HepG2 (cell line): ENCODE measurements at regions of chr5 and their contacts with region 1.

Region 1: GRCh38 chr5:157743163-157744050 is at the start of gene LSM11:
- DNase-seq: peak; percentile 67
- ATAC-seq: peak; percentile 95
- H3K4me3 ChIP-seq: peak within 1 kb of the TSS; percentile 74 to 88 (median 84)
- H3K27ac ChIP-seq: peak within 1 kb of the TSS; percentile 46
- H3K4me1 ChIP-seq: peaks cover 20% of the 10 kb centered on the region
- H3K27me3 ChIP-seq: no peaks in the 10 kb centered on the region; a peak in 1 of 5 replicates
- CTCF ChIP-seq: peak; percentile 98
- EP300 ChIP-seq: 0 out of 4 replicates have a peak, but pooled peaks of 1 of the 2 experiments have one; percentile 33
- POLR2A ChIP-seq: peak; percentile 31 to 39; a peak in 3 of 4 replicates
- RAD21 ChIP-seq: peak; percentile 98
- total RNA-seq, gene LSM11: 7.2 and 9.9 TPM in 2 replicates

Region 2: GRCh38 chr5:156934450-156935211 is 808.8 kb before region 1 on chr5:
- CTCF ChIA-PET with region 1: no interaction called
- POLR2A ChIA-PET with region 1: no interaction called
- in situ Hi-C with region 1: no loop called
- intact Hi-C with region 1: no loop called
- DNase-seq: peak; percentile 9
- ATAC-seq: 0 out of 3 replicates have a peak, but pooled peaks have one; percentile 30
- H3K4me3 ChIP-seq: no peak overlapping the region
- H3K27ac ChIP-seq: no peak overlapping the region
- H3K4me1 ChIP-seq: peaks cover 12% of the 10 kb centered on the region; the same call in 1 of the 2 replicates
- H3K27me3 ChIP-seq: no peaks in the 10 kb centered on the region; a peak in 1 of 5 replicates
- CTCF ChIP-seq: peak; percentile 52
- EP300 ChIP-seq: no peak
- POLR2A ChIP-seq: no peak
- RAD21 ChIP-seq: no peak

Region 3: GRCh38 chr5:157328277-157328912 is 415.0 kb before region 1 on chr5:
- CTCF ChIA-PET with region 1: interaction called, 11 read pairs
- POLR2A ChIA-PET with region 1: no interaction called
- in situ Hi-C with region 1: loop called (anchors 25 kb)
- intact Hi-C with region 1: loop called (anchors 1 kb)
- DNase-seq: peak; percentile 73
- ATAC-seq: peak; percentile 98
- H3K4me3 ChIP-seq: no peak overlapping the region; a peak in 1 of 6 replicates
- H3K27ac ChIP-seq: no peak overlapping the region
- H3K4me1 ChIP-seq: peaks cover 36% of the 10 kb centered on the region
- H3K27me3 ChIP-seq: no peaks in the 10 kb centered on the region
- CTCF ChIP-seq: peak; percentile 92
- EP300 ChIP-seq: no peak
- POLR2A ChIP-seq: no peak
- RAD21 ChIP-seq: peak; percentile 63

Region 4: GRCh38 chr5:157431544-157432200 is 311.7 kb before region 1 on chr5:
- CTCF ChIA-PET with region 1: interaction called, 12 read pairs
- POLR2A ChIA-PET with region 1: no interaction called
- in situ Hi-C with region 1: no loop called
- intact Hi-C with region 1: no loop called
- DNase-seq: peak; percentile 34
- ATAC-seq: peak; percentile 72
- H3K4me3 ChIP-seq: no peak overlapping the region
- H3K27ac ChIP-seq: no peak overlapping the region
- H3K4me1 ChIP-seq: no peaks in the 10 kb centered on the region
- H3K27me3 ChIP-seq: no peaks in the 10 kb centered on the region
- CTCF ChIP-seq: peak; percentile 66
- EP300 ChIP-seq: no peak
- POLR2A ChIP-seq: no peak
- RAD21 ChIP-seq: no peak

Region 5: DNA sequence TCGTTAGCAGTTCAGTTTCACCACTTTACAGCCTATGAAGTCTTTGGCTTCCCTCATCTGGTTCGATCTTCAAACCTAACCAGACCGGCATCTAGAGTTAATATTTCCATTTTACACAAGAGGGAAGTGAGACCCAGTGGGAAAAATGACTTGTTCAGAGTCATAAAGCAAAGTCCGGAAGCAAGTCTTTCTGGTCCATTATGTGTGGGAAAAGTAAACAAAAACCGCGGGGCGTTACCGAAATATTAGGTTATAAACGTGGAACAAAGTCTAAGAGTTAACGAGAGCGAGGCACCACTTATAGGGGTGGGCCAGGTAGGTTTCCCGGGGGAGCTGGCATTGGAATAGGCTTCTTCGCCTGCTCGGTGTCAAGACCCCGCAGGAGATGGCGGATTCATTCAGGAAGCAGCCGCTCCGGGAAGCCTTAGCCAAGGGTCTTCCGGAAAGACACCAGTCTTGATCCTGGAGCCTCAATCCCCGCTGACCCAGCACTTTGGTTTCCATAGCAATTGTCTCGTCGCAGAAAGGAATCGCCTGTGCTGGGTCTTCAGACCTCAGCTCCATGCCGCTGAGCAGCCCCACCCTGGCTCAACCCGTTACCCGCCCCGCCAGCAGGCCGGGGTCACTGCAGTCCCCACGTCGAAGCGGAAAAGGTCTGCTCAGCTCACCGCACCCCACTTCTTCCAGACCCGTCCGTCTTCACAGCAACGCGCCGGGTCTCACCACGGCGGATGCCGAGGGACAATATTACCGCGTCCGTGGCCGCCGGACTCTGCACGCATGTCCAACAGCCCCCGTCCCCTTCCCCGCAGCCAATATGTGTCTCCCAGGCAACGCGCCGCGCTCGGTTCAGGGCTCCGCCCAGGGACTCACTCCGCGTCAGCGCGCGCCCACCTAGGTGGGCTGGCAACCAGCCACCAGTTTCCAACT is 72.5 kb before region 1 on chr5 and contains the start of gene C5orf52:
- CTCF ChIA-PET with region 1: interaction called, 54 read pairs
- POLR2A ChIA-PET with region 1: no interaction called
- in situ Hi-C with region 1: loop called (anchors 5 kb)
- intact Hi-C with region 1: loop called (anchors 1 kb)
- DNase-seq: peak; percentile 47
- ATAC-seq: no peak
- H3K4me3 ChIP-seq: no peak within 1 kb of the TSS; a peak in 1 of 6 replicates
- H3K27ac ChIP-seq: no peak within 1 kb of the TSS
- H3K4me1 ChIP-seq: peaks cover 15% of the 10 kb centered on the region; the same call in 1 of the 2 replicates
- H3K27me3 ChIP-seq: no peaks in the 10 kb centered on the region
- CTCF ChIP-seq: no peak
- EP300 ChIP-seq: no peak
- POLR2A ChIP-seq: no peak
- RAD21 ChIP-seq: no peak
- total RNA-seq, gene C5orf52: not detected in 2 replicates

Region 6: GRCh38 chr5:157731272-157732129 is 11.9 kb before region 1 on chr5 and contains the start of gene THG1L:
- CTCF ChIA-PET with region 1: interaction called, 3 read pairs
- POLR2A ChIA-PET with region 1: interaction called, 13 read pairs
- in situ Hi-C with region 1: no loop called
- intact Hi-C with region 1: loop called (anchors 1 kb)
- DNase-seq: peak; percentile 95
- ATAC-seq: peak; percentile 100
- H3K4me3 ChIP-seq: peak within 1 kb of the TSS; percentile 64 to 83 (median 67)
- H3K27ac ChIP-seq: peak within 1 kb of the TSS; percentile 87
- H3K4me1 ChIP-seq: peaks cover 7% of the 10 kb centered on the region; the same call in 1 of the 2 replicates
- H3K27me3 ChIP-seq: no peaks in the 10 kb centered on the region; a peak in 1 of 5 replicates
- CTCF ChIP-seq: no peak
- EP300 ChIP-seq: no peak
- POLR2A ChIP-seq: peak; percentile 92 to 95
- RAD21 ChIP-seq: no peak
- total RNA-seq, gene THG1L: 16.6 and 21.7 TPM in 2 replicates